ENCODE measurements at regions of chr2 and their contacts with region 1.

Region 1: DNA sequence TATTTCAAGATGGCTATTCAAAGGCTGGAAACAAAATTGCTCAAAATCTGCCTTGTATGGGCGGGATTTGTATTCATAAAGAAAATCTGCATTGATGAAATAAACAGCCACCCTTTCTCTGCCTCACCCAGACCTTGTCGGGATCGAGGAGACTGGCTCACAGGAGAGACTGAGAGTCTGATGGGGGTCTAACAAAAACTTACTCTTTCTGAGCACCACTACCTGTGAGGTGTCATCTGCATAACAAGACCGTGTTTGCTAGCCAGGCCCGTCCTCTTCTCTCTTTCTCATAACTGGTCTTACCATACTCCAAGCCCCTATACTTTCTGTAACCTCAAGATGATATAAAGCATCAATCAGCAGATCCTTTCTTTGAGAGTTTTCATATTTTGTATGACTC is 115.6 kb downstream of the INO80D start:
- DNase-seq: no peak
- ATAC-seq: no peak
- H3K4me3 ChIP-seq: no peak overlapping the region
- H3K4me3 Mint-ChIP-seq: no peak overlapping the region
- H3K27ac ChIP-seq: no peak overlapping the region
- H3K27ac Mint-ChIP-seq: no peak overlapping the region
- H3K4me1 ChIP-seq: no peaks in the 10 kb centered on the region
- H3K4me1 Mint-ChIP-seq: no peaks in the 10 kb centered on the region
- H3K27me3 ChIP-seq: no peaks in the 10 kb centered on the region
- H3K27me3 Mint-ChIP-seq: peaks cover 14 to 31% of the 10 kb centered on the region in 2 donors
- CTCF ChIP-seq: no peak

Region 2: DNA sequence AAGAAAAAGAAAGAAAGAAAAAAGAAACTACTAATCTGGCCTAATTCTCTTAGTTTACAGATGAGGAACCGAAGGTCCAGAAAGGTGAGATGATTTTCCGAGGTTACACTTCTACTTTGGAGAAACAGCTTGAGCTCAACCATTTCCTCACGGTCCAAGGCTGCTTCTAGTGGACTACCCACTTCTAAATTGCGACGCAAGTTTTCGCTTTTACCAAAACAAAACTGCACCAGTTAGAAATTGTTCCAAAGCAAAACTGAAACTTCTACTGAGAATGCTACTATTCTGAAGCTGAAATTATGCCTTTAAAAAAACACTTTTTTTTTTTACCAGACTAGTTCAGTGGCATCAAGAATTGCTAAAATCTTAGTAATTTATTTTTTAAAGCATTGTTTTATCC is 14.0 kb after region 1 on chr2:
- intact Hi-C with region 1: loop called (anchors 1 kb)
- DNase-seq: no peak
- ATAC-seq: no peak
- H3K4me3 ChIP-seq: no peak overlapping the region
- H3K4me3 Mint-ChIP-seq: no peak overlapping the region
- H3K27ac ChIP-seq: no peak overlapping the region
- H3K27ac Mint-ChIP-seq: no peak overlapping the region
- H3K4me1 ChIP-seq: no peaks in the 10 kb centered on the region
- H3K4me1 Mint-ChIP-seq: peaks cover 0 to 4% of the 10 kb centered on the region in 2 donors
- H3K27me3 ChIP-seq: no peaks in the 10 kb centered on the region
- H3K27me3 Mint-ChIP-seq: no peaks in the 10 kb centered on the region
- CTCF ChIP-seq: no peak

Measured in natural killer cell (primary cell).